ENCODE measurements at regions of chr4 and their contacts with region 1.

Region 1: DNA sequence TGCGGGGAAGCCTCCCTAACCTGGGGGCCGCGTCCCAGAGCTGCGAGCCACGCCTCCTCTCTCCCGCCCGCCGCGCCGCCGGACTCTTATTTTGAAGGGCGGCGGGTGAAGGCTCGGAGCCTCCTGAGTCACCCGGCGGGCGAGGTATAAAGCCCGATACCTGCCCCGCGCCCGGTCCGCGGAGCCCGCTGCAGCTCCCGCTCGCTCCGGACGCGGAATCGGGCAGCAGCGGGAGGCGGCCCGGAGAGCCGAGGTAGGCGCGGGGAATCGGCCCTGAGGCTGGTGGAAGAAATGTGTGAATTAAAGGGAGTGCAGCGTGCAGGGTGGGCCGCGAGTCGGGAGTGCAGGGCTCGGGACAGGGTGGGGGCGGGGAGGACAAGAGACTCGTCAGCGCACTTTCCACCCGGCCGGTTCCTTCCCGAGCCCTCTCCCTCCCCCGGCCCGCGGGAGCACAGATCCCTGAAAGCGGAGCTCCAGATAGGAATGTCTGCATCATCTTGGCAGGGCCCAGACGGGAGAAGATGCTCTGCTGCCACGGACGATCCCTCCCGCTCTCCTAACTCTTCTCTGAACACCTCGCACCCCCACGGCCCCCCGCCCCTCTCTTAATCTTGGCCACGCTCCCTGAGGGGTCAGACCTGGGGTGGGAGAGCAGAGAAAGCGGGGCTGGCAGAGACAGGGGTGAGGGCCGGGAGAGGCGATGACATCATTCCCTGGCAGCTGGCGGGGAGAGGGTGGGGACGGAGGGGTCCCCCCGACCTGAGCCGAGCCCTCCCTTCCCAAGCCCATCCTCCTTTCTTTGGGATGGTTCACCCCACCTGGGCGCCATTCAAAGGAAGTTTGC is 177.9 kb downstream of the CBR4 start:
- DNase-seq: peak; percentile 85
- H3K4me3 ChIP-seq: peak overlapping the region; percentile 89
- H3K27ac ChIP-seq: peak overlapping the region; percentile 86
- H3K4me1 ChIP-seq: peaks cover 66% of the 10 kb centered on the region
- H3K27me3 ChIP-seq: peaks cover 14% of the 10 kb centered on the region
- CTCF ChIP-seq: no peak

Region 2: DNA sequence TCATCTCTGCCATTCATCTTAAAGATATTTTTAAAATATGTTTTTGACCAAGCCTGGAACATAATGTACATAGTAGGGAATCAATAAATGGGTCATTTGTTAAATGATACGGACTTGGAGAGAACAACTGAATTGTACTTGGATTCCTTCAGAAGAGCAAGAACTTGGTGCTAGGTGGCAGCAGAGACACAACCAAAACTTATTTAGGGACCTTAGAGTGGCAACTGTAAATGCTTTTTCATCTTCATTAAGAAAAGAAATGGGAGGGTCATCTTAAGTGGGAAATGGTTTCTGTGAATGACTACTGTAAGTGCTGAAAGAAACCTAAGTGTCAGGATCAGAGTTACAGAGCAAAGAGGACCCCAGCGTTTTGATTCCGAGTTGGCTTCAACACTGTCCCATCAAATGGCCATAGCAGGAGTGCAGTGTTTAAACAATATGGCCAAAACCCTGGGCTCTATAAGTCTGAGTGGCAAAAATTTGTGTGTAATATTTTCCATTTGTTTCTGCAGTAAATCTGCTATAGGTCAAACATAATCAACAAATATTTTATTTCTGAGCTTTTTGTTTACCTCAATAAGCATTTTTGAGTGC is 121.7 kb before region 1 on chr4:
- intact Hi-C with region 1: loop called (anchors 10 kb)
- DNase-seq: no peak
- H3K4me3 ChIP-seq: no peak overlapping the region
- H3K27ac ChIP-seq: peak overlapping the region; percentile 67
- H3K4me1 ChIP-seq: peaks cover 24% of the 10 kb centered on the region
- H3K27me3 ChIP-seq: no peaks in the 10 kb centered on the region
- CTCF ChIP-seq: peak; percentile 73